Activated T-helper 1 cell treated with anti-CD3 and anti-CD28 coated beads, Interleukin-12 subunit alpha, Interleukin-12 subunit beta, Interleukin-2, Interleukin-4 antibody, amounts not matched to agents 30 ng/mL and 10 ng/mL and 1 ng/mL, durations not matched to agents 14 hours and 24 hours and 36 hours (primary cell): ENCODE measurements at regions of chr6 and their contacts with region 1.

Region 1: DNA sequence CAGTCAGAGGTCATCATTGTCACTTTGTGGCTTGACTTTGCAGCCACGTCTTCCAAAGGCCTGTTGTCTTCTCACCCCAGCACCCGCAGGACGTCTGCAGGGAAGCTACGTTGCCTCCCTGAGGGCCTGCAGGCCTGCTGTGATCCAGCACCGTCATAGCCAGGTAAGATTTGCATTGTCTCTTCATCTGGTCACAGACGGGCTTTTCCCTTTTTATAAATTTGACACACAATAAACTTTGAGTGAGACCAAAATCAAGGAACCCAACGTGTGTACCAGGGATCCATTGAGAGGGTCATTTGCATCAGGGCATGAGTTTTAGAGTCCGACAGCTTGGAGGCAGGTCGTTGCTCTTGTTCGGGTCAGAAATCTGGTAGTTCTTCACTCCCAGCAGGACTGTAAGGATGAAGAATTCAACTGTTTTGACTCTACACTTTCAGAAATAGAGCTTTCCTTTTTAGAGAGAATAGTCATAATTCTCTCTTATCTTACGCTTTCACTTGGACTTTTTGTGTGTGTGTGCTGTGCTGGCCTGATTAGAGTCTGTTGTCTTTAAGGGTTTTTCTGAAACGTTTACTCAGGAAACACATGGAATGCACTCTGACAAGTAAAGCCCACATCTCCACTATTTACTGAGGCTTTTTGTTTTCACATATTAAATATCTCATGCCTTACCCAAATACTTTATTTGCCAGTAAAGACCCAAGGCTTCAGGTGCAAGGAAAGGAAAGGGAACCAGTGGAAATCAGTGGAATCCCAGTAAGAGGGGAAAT is 177.2 kb upstream of the TAB2 start:
- DNase-seq: peak; percentile 62
- H3K4me3 Mint-ChIP-seq: peak overlapping the region; percentile 84
- H3K27ac Mint-ChIP-seq: peak overlapping the region; percentile 100
- H3K4me1 Mint-ChIP-seq: peaks cover 64% of the 10 kb centered on the region
- H3K27me3 Mint-ChIP-seq: no peaks in the 10 kb centered on the region

Region 2: GRCh38 chr6:149094156-149094555 is 46.2 kb before region 1 on chr6:
- intact Hi-C with region 1: loop called (anchors 1 kb)
- DNase-seq: no peak
- H3K4me3 Mint-ChIP-seq: peak overlapping the region; percentile 64
- H3K27ac Mint-ChIP-seq: peak overlapping the region; percentile 88
- H3K4me1 Mint-ChIP-seq: peaks cover 78% of the 10 kb centered on the region
- H3K27me3 Mint-ChIP-seq: no peaks in the 10 kb centered on the region

Region 3: GRCh38 chr6:149218471-149218870 is 78.1 kb after region 1 on chr6:
- intact Hi-C with region 1: loop called (anchors 1 kb)
- DNase-seq: no peak
- H3K4me3 Mint-ChIP-seq: peak overlapping the region; percentile 45
- H3K27ac Mint-ChIP-seq: peak overlapping the region; percentile 77
- H3K4me1 Mint-ChIP-seq: peaks cover 56% of the 10 kb centered on the region
- H3K27me3 Mint-ChIP-seq: no peaks in the 10 kb centered on the region

Region 4: DNA sequence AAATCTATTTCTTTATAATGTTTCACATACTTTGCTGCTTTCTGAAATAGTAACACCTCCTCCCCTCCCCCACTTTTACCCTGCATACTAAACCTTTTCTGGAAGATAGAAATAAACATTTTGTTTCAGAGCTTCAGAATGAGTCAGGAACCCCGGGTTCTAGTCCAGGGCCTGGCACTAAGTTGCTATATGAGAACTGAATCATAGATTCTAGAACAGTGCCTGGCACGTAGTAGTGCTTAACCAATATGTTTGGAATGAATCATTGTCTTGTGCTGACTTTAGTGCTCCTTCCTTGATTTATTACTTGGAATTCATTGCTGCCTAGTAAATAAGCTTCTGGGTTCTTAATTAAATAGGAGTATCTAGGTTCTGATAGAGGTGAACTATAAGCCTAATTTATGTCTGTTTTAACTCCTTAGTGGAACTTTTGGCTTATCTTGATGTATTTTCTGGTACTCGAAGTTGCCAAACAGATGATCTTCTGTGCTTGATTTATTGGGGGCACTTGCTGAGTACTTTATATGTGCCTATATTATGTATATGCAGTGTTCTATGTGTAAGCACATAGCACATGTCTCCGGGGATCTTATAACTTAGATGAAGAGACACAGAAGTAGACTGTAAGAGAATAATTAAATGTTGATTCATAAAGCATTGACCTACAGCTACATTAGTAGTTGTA is 195.7 kb after region 1 on chr6:
- intact Hi-C with region 1: loop called (anchors 1 kb)
- DNase-seq: peak; percentile 22
- H3K4me3 Mint-ChIP-seq: peak overlapping the region; percentile 76
- H3K27ac Mint-ChIP-seq: peak overlapping the region; percentile 93
- H3K4me1 Mint-ChIP-seq: peaks cover 94% of the 10 kb centered on the region
- H3K27me3 Mint-ChIP-seq: no peaks in the 10 kb centered on the region

Region 5: DNA sequence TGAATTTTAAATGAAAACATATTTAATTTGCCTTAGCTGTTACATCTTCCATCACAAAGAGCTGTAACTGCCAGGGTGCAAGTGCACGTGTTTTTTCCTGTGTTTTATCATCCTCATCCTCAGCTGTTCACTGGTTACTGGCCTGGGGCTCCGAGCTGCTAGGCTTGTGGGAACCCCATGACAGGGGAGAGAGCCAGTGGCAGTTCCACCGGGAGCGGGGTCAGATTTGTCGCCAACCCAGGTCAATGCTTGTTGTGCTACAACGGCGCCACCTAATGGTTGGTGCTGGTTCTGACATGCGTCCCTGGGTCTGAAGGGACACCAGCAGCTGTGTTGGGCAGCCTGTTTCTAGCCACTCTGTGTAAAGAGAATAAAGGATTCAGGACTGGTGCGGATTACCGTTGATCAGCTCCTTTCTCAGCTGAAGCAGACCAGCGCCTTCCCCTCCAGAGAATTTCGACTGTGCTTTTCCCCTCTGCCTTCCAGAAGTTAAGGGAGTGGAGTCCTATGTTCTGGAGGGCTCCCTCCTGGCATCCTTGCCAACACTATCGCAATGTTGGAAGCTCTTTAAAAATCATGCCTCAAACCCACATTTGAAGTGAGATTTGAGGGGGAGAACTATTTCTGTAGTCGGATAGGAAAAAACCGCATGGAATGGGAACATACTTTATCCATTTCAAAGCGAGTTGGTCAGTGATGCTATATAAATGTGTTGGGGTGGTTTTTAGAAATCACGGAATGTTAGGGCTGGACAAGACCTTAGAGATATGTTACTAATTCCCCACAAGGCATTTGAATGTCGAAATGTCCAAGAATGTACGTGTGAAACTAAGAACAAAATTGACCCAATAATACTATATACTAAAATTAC is 291.8 kb after region 1 on chr6:
- intact Hi-C with region 1: loop called (anchors 5 kb)
- DNase-seq: peak; percentile 79
- H3K4me3 Mint-ChIP-seq: peak overlapping the region; percentile 48
- H3K27ac Mint-ChIP-seq: peak overlapping the region; percentile 79
- H3K4me1 Mint-ChIP-seq: peaks cover 23% of the 10 kb centered on the region
- H3K27me3 Mint-ChIP-seq: no peaks in the 10 kb centered on the region